Activated CD4-positive, alpha-beta memory T cell treated with anti-CD3 and anti-CD28 coated beads for 36 hours (primary cell): ENCODE measurements at regions of chr11 and their contacts with region 1.

Region 1: DNA sequence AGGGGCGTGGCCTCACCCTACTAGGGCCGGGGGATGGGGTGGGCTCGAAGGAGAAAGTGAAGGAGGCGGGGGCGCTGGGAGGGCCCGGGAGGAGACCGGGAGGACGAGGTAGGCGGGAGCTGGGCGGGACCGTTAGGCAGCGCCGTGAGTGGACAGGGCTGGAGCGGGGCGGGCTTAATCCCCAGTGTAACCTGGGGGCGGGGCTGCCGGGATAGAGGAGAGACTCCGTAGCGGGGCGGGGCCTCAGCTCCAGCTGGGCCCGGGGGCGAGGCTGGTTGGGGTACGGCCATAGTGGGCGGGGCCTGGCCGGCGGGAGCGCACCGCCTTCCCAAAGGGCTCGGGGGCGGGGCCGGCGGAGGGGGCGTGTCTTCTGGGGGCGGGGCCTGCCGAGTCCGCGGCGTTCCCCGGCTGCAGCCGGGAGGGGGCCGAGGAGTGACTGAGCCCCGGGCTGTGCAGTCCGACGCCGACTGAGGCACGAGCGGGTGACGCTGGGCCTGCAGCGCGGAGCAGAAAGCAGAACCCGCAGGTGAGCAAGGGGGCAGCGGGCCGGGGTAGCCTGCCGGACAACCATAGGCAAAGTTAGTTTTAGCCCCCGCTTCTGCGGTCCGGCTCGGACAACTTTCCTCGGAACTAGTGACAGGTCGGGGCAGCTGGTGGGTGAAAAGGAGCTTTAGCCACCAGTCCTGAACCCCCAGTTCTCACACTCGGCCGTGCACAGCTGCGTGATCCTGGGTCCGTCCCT is at the start of gene CD82:
- DNase-seq: peak; percentile 100
- H3K4me3 Mint-ChIP-seq: peak within 1 kb of the TSS; percentile 85
- H3K27ac Mint-ChIP-seq: peak within 1 kb of the TSS; percentile 90
- H3K4me1 Mint-ChIP-seq: peaks cover 56% of the 10 kb centered on the region
- H3K27me3 Mint-ChIP-seq: no peaks in the 10 kb centered on the region
- total RNA-seq, gene CD82: 243 to 277 TPM

Region 2: GRCh38 chr11:44596525-44597276 is 31.3 kb after region 1 on chr11:
- CTCF ChIA-PET with region 1: interaction called, 3 read pairs
- POLR2A ChIA-PET with region 1: interaction called, 7 read pairs
- intact Hi-C with region 1: loop called (anchors 1 kb)
- DNase-seq: peak; percentile 88
- H3K4me3 Mint-ChIP-seq: peak overlapping the region; percentile 63
- H3K27ac Mint-ChIP-seq: peak overlapping the region; percentile 90
- H3K4me1 Mint-ChIP-seq: peaks cover 86% of the 10 kb centered on the region
- H3K27me3 Mint-ChIP-seq: no peaks in the 10 kb centered on the region

Region 3: GRCh38 chr11:44621140-44621681 is 55.8 kb after region 1 on chr11:
- CTCF ChIA-PET with region 1: interaction called, 576 read pairs
- POLR2A ChIA-PET with region 1: interaction called, 5 read pairs
- intact Hi-C with region 1: no loop called
- DNase-seq: peak; percentile 75
- H3K4me3 Mint-ChIP-seq: no peak overlapping the region
- H3K27ac Mint-ChIP-seq: peak overlapping the region; percentile 9
- H3K4me1 Mint-ChIP-seq: peaks cover 36% of the 10 kb centered on the region
- H3K27me3 Mint-ChIP-seq: no peaks in the 10 kb centered on the region

Region 4: DNA sequence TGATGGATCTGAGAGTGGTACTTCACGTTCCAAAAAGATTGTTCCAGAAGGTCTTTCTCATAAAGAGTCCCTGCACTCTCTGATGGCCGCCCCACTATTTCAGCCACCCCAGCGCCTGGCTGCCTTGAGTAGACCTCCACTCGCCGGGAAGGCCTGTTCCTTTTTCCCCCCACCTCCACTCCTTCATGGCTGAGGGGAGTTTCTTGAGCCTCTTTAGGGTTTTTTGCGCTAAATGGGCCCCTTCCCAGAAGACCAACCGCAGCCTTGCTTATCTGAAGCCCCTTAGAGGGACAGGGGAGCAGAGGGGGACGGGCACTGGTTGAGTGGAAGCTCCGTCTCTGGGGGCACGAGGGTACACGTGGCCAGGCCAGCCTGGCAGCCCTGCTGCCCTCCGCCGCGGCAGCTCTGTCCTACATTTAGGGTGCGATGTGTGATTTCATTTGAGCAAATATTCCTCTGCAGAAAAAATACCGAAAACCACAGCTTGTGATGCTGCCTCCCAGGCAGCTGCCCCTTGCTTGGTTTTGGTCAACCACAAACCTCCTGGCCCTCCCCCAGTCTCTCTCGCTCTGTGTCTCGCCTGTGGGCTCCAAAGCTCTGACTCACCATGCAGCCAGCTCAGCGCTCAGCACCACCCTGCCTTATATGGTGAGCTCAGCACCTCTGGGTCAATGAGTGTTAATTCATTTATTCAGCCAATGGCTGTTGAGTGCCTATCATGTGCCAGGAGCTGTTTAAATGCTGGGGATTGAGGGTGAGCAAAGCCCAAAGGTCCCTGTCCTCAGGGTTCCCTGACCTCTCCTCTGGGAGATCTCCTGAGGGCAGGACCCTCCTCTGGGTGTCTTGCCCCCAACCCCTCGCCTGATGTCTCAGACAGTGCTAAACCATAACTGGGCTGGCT is 296.7 kb after region 1 on chr11:
- CTCF ChIA-PET with region 1: no interaction called
- POLR2A ChIA-PET with region 1: no interaction called
- intact Hi-C with region 1: loop called (anchors 5 kb)
- DNase-seq: peak; percentile 94
- H3K4me3 Mint-ChIP-seq: peak overlapping the region; percentile 18
- H3K27ac Mint-ChIP-seq: peak overlapping the region; percentile 58
- H3K4me1 Mint-ChIP-seq: peaks cover 34% of the 10 kb centered on the region
- H3K27me3 Mint-ChIP-seq: peaks cover 12% of the 10 kb centered on the region

Region 5: DNA sequence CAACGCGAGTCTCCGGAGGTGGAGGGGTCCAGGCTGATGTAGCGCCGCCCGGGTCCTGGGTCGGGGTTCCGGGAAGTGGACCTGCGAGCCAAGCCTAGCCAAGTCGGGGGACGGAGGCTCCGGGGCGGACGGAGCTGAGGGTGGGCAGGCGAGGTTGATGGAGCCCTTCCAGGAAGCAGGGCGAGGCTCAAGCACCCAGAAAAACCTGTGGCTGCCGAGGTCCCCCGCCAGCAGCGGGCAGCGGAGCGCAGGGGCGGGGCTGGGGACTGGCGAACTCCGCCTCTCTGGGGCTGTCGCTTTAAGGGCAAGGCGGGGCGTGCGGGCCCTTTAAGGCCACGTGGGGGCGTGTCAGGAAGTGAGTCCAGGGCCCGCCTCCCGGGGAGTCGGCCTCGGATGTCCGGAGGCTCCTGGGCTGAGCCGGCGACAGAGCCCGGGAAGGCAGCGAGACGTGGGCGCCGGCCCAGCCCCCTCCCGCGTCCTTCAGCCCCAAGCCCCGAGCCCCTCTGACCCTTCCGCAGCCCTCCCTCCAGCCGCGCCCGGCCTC is 1239.5 kb after region 1 on chr11 and contains the start of gene SLC35C1:
- CTCF ChIA-PET with region 1: no interaction called
- POLR2A ChIA-PET with region 1: no interaction called
- intact Hi-C with region 1: loop called (anchors 10 kb)
- DNase-seq: peak; percentile 97
- H3K4me3 Mint-ChIP-seq: peak within 1 kb of the TSS; percentile 90
- H3K27ac Mint-ChIP-seq: peak within 1 kb of the TSS; percentile 86
- H3K4me1 Mint-ChIP-seq: peaks cover 42% of the 10 kb centered on the region
- H3K27me3 Mint-ChIP-seq: no peaks in the 10 kb centered on the region
- total RNA-seq, gene SLC35C1: 10.7 to 11.4 TPM

Region 6: DNA sequence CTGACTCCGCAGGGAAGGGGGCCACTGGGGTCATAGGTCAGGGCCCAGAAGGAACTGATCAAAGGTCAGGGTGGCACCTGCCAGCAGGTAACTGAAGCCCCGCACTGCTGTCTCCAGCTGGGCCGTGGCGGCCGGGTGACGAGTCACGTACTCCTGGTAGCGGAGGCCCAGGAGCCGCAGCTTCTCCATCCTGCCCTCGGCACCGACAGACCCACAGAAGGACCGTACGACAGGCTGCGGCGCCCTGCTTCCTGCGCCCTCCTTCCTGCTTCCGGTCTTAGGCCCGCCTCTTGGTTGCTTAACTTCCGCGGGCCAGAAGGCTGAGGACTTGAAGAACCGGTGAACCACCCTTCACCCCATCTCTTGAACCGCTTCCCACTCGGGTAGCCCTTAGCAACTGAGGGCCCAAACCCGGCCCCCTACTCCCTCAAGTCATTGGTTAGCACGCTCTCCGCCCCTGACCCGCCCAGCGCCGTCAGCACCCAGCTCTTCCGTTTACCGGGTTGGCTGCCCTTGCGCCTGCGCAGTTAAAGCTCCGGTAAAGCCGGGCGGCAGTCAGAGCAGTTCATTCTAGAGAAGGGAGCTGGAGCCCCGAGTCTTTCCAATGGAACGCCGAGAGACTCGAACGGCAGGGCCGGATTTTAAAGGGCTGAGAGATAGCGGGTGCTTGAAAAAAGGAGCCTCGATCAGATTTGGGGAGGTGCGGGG is 1352.4 kb after region 1 on chr11 and contains the start of gene PEX16:
- CTCF ChIA-PET with region 1: no interaction called
- POLR2A ChIA-PET with region 1: no interaction called
- intact Hi-C with region 1: loop called (anchors 5 kb)
- DNase-seq: peak; percentile 98
- H3K4me3 Mint-ChIP-seq: peak within 1 kb of the TSS; percentile 96
- H3K27ac Mint-ChIP-seq: peak within 1 kb of the TSS; percentile 96
- H3K4me1 Mint-ChIP-seq: peaks cover 26% of the 10 kb centered on the region
- H3K27me3 Mint-ChIP-seq: peaks cover 3% of the 10 kb centered on the region
- total RNA-seq, gene PEX16: 28.2 to 34.6 TPM